ENCODE measurements at regions of chr1 and their contacts with region 1.

Region 1: GRCh38 chr1:100152271-100152670 is 19.3 kb downstream of the TRMT13 start:
- DNase-seq: no peak
- ATAC-seq: no peak
- H3K4me3 ChIP-seq: no peak overlapping the region
- H3K27ac ChIP-seq: no peak overlapping the region
- H3K4me1 ChIP-seq: no peaks in the 10 kb centered on the region
- H3K27me3 ChIP-seq: no peaks in the 10 kb centered on the region
- CTCF ChIP-seq: no peak
- POLR2A ChIP-seq: no peak

Region 2: GRCh38 chr1:99872063-99872462 is 280.2 kb before region 1 on chr1:
- intact Hi-C with region 1: loop called in 2 of 10 experiments (anchors 10 kb)
- DNase-seq: no peak
- ATAC-seq: no peak
- H3K4me3 ChIP-seq: no peak overlapping the region
- H3K27ac ChIP-seq: no peak overlapping the region
- H3K4me1 ChIP-seq: no peaks in the 10 kb centered on the region
- H3K27me3 ChIP-seq: no peaks in the 10 kb centered on the region
- CTCF ChIP-seq: no peak
- POLR2A ChIP-seq: no peak

Region 3: GRCh38 chr1:99891997-99892396 is 260.3 kb before region 1 on chr1:
- intact Hi-C with region 1: loop called in 3 of 10 experiments (anchors 10 kb)
- DNase-seq: no peak
- ATAC-seq: no peak
- H3K4me3 ChIP-seq: no peak overlapping the region
- H3K27ac ChIP-seq: no peak overlapping the region
- H3K4me1 ChIP-seq: no peaks in the 10 kb centered on the region
- H3K27me3 ChIP-seq: no peaks in the 10 kb centered on the region
- CTCF ChIP-seq: no peak
- POLR2A ChIP-seq: no peak

Region 4: GRCh38 chr1:100087396-100087795 is 64.9 kb before region 1 on chr1:
- intact Hi-C with region 1: no loop called
- DNase-seq: no peak
- ATAC-seq: no peak
- H3K4me3 ChIP-seq: no peak overlapping the region
- H3K27ac ChIP-seq: no peak overlapping the region
- H3K4me1 ChIP-seq: peaks cover 0 to 4% (median 0%) of the 10 kb centered on the region in 12 donors
- H3K27me3 ChIP-seq: no peaks in the 10 kb centered on the region
- CTCF ChIP-seq: no peak
- POLR2A ChIP-seq: no peak

Region 5: DNA sequence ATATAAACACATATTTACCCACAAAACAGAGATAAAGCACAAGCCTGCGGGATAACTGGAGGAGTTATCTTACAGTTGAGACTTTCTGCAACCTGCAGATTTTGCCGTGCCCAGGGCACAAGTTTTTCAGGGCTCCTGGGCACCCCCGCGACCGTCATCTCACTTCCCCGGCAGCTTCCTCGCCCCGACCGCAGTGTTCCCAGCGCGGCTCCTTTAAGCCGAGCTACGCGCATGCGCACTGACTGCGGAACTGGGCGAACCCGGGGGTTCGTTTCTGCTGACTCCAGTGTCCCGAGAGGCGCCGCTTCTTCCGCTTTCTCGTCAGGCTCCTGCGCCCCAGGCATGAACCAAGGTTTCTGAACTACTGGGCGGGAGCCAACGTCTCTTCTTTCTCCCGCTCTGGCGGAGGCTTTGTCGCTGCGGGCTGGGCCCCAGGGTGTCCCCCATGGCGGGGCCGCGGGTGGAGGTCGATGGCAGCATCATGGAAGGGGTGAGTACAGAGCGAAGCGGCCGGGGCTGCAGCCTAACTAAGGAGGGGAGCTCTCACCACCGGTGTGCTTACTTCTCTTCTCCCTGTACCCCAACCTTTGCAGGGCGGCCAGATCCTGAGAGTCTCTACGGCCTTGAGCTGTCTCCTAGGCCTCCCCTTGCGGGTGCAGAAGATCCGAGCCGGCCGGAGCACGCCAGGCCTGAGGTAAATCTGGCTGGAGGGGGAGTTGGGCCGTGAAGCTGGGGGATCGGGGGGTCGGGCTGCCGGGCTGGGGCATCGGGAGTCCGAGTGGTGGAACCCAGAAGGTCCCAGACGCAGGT is 113.9 kb after region 1 on chr1 and contains the start of gene RTCA:
- intact Hi-C with region 1: loop called in 3 of 10 experiments (anchors 10 kb)
- DNase-seq: peak; percentile 96 to 99 (median 98)
- ATAC-seq: peak; percentile 98 to 100 (median 99)
- H3K4me3 ChIP-seq: peak within 1 kb of the TSS; percentile 62 to 99 (median 82)
- H3K27ac ChIP-seq: peak within 1 kb of the TSS; percentile 39 to 92 (median 82)
- H3K4me1 ChIP-seq: peaks cover 0 to 35% (median 23%) of the 10 kb centered on the region in 12 donors
- H3K27me3 ChIP-seq: no peaks in the 10 kb centered on the region
- CTCF ChIP-seq: peak in 1 of 12 donors; percentile 27
- POLR2A ChIP-seq: peak; percentile 14 to 93
- total RNA-seq, gene RTCA: 31.4 to 54.6 (median 36.3) TPM

Region 6: GRCh38 chr1:100469578-100469977 is 317.3 kb after region 1 on chr1:
- intact Hi-C with region 1: loop called in 1 of 10 experiments (anchors 5 kb)
- DNase-seq: no peak
- ATAC-seq: peak in 1 of 4 donors; percentile 61
- H3K4me3 ChIP-seq: no peak overlapping the region
- H3K27ac ChIP-seq: no peak overlapping the region
- H3K4me1 ChIP-seq: peaks cover 0 to 7% (median 0%) of the 10 kb centered on the region in 12 donors
- H3K27me3 ChIP-seq: no peaks in the 10 kb centered on the region
- CTCF ChIP-seq: no peak
- POLR2A ChIP-seq: no peak

Measured in heart left ventricle (tissue), 16 donors.